Thyroid gland (tissue), 4 donors: ENCODE measurements at regions of chr11 and their contacts with region 1.

Region 1: DNA sequence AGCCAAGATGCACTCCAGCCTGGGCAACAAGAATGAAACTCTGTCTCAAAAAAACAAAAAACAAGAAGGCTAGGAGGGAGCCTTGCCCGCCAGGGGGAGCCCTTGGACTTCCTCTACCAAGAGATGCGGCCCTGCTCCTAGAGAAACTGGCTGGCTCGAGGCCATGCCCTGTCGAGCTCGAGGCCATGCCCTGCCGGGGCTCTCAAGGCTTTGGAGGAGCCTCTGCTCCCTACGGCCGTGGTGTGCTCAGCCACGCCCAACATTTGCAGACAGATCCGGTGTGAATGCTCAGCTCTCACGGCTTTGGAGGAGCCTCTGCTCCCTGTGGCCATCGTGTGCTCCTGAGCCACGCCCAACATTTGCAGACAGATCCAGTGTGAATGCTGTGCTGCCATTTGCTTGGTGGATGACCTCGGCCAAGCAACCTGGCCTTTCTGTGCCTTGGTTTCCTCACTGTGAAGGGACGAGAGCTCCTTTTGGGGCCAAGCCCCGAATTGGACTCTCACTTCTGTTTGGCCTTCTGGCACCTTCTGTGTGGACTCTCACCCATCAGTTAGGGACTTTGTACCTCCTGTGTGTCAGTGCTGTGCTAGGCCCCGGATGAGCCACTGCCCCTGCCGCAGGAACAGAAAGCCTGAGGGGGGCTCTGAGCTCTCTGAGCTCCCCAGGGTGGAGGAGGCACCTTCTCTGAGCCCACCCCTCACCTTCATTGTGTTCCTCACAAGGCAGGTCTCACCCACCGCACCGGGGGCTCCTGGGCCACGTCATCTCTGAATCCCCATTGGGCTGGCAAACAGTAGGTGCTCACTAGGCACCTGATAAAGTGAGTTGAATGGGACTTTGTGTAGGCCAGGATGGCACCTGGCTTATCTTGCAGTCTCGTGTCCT is 14.1 kb downstream of the C11orf24 start:
- DNase-seq: peak; percentile 99
- H3K4me3 ChIP-seq: no peak overlapping the region
- H3K27ac ChIP-seq: no peak overlapping the region
- H3K4me1 ChIP-seq: peaks cover 0 to 5% of the 10 kb centered on the region in 2 donors
- H3K27me3 ChIP-seq: no peaks in the 10 kb centered on the region
- CTCF ChIP-seq: peak; percentile 82 to 95 (median 90)
- POLR2A ChIP-seq: no peak

Region 2: GRCh38 chr11:68297812-68298658 is 40.3 kb after region 1 on chr11:
- intact Hi-C with region 1: loop called (anchors 2 kb)
- DNase-seq: peak; percentile 70 to 75
- H3K4me3 ChIP-seq: no peak overlapping the region
- H3K27ac ChIP-seq: no peak overlapping the region
- H3K4me1 ChIP-seq: peaks cover 7 to 8% of the 10 kb centered on the region in 2 donors
- H3K27me3 ChIP-seq: no peaks in the 10 kb centered on the region
- CTCF ChIP-seq: peak; percentile 79 to 99 (median 95)
- POLR2A ChIP-seq: no peak

Region 3: DNA sequence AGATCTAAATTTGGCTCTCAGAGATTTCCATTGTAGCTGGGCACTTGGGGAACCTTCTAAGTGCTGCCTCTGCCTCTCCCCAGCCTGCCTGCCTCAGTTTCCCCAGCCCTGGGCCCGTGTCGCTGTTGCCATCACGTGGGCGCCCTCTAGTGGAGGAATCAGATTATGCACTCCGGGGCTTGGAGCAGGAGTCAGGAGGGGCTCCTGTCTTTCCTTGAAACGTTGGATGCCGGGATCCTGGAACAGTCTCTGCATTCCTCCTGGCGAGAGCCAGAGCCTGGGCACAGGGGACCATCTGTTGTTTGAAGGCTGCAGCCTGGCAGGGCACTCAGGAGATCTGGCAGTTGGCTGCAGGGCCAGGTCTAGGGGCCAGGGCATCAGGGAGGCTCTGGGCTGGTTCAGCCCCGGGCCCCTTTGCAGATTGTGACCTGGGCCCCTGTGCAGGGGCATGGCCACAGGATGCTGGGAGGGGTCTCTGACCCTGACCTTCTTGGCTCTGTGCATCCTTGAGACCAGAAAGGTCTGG is 126.3 kb after region 1 on chr11:
- intact Hi-C with region 1: loop called (anchors 5 kb)
- DNase-seq: peak; percentile 58 to 65
- H3K4me3 ChIP-seq: no peak overlapping the region
- H3K27ac ChIP-seq: no peak overlapping the region
- H3K4me1 ChIP-seq: peaks cover 21 to 34% of the 10 kb centered on the region in 2 donors
- H3K27me3 ChIP-seq: no peaks in the 10 kb centered on the region
- CTCF ChIP-seq: peak; percentile 82 to 95 (median 88)
- POLR2A ChIP-seq: no peak

Region 4: GRCh38 chr11:68447015-68447801 is 189.5 kb after region 1 on chr11:
- intact Hi-C with region 1: loop called (anchors 2 kb)
- DNase-seq: peak; percentile 73 to 76
- H3K4me3 ChIP-seq: no peak overlapping the region
- H3K27ac ChIP-seq: no peak overlapping the region
- H3K4me1 ChIP-seq: no peaks in the 10 kb centered on the region
- H3K27me3 ChIP-seq: no peaks in the 10 kb centered on the region
- CTCF ChIP-seq: peak; percentile 80 to 100 (median 92)
- POLR2A ChIP-seq: no peak

Region 5: GRCh38 chr11:68798221-68798813 is 540.6 kb after region 1 on chr11:
- intact Hi-C with region 1: no loop called
- DNase-seq: peak; percentile 15 to 18
- H3K4me3 ChIP-seq: no peak overlapping the region
- H3K27ac ChIP-seq: no peak overlapping the region
- H3K4me1 ChIP-seq: no peaks in the 10 kb centered on the region
- H3K27me3 ChIP-seq: no peaks in the 10 kb centered on the region
- CTCF ChIP-seq: peak in 4 of 6 experiments; percentile 21 to 53 (median 30)
- POLR2A ChIP-seq: no peak